Psoas muscle (tissue), 8 donors: ENCODE measurements at regions of chr1 and their contacts with region 1.

Region 1: GRCh38 chr1:109099938-109100773 is 9.6 kb downstream of the TMEM167B start:
- DNase-seq: peak; percentile 96 to 99
- ATAC-seq: peak; percentile 98
- H3K4me3 ChIP-seq: peak overlapping the region; percentile 75
- H3K27ac ChIP-seq: peak overlapping the region; percentile 97
- H3K4me1 ChIP-seq: peaks cover 21% of the 10 kb centered on the region
- H3K27me3 ChIP-seq: no peaks in the 10 kb centered on the region
- CTCF ChIP-seq: peak; percentile 82

Region 2: GRCh38 chr1:109075531-109076490 is 24.3 kb before region 1 on chr1 and contains the start of gene TAF13:
- intact Hi-C with region 1: loop called in 1 of 2 experiments (anchors 1 kb)
- DNase-seq: peak; percentile 96 to 98
- ATAC-seq: peak; percentile 100
- H3K4me3 ChIP-seq: peak within 1 kb of the TSS; percentile 99
- H3K27ac ChIP-seq: peak within 1 kb of the TSS; percentile 99
- H3K4me1 ChIP-seq: peaks cover 9% of the 10 kb centered on the region
- H3K27me3 ChIP-seq: no peaks in the 10 kb centered on the region
- CTCF ChIP-seq: peak; percentile 44
- total RNA-seq, gene TAF13: 61.5 to 89.9 (median 72.9) TPM

Region 3: GRCh38 chr1:109089242-109090015 is 10.7 kb before region 1 on chr1:
- intact Hi-C with region 1: no loop called
- DNase-seq: peak; percentile 51 to 80
- ATAC-seq: peak; percentile 62 to 72 (median 70)
- H3K4me3 ChIP-seq: peak overlapping the region; percentile 92
- H3K27ac ChIP-seq: peak overlapping the region; percentile 99
- H3K4me1 ChIP-seq: peaks cover 22% of the 10 kb centered on the region
- H3K27me3 ChIP-seq: no peaks in the 10 kb centered on the region
- CTCF ChIP-seq: peak; percentile 50

Region 4: GRCh38 chr1:109193653-109194590 is 93.8 kb after region 1 on chr1:
- intact Hi-C with region 1: loop called in 1 of 2 experiments (anchors 10 kb)
- DNase-seq: peak; percentile 21 to 61
- ATAC-seq: peak in 2 of 4 donors; percentile 80 to 91
- H3K4me3 ChIP-seq: no peak overlapping the region
- H3K27ac ChIP-seq: no peak overlapping the region
- H3K4me1 ChIP-seq: peaks cover 6% of the 10 kb centered on the region
- H3K27me3 ChIP-seq: no peaks in the 10 kb centered on the region
- CTCF ChIP-seq: peak; percentile 60

Region 5: GRCh38 chr1:109213785-109214468 is 113.8 kb after region 1 on chr1 and contains the start of gene SARS1:
- intact Hi-C with region 1: loop called in 1 of 2 experiments (anchors 5 kb)
- DNase-seq: peak; percentile 89 to 93
- ATAC-seq: peak; percentile 94 to 95 (median 94)
- H3K4me3 ChIP-seq: peak within 1 kb of the TSS; percentile 91
- H3K27ac ChIP-seq: peak within 1 kb of the TSS; percentile 89
- H3K4me1 ChIP-seq: peaks cover 18% of the 10 kb centered on the region
- H3K27me3 ChIP-seq: no peaks in the 10 kb centered on the region
- CTCF ChIP-seq: no peak
- total RNA-seq, gene SARS1: 76.4 to 155 (median 123) TPM